ENCODE measurements at regions of chr2 and their contacts with region 1.

Region 1: GRCh38 chr2:146135245-146135644 is 1615.3 kb upstream of the ZEB2 start:
- DNase-seq: no peak
- H3K4me3 ChIP-seq: no peak overlapping the region
- H3K27ac ChIP-seq: no peak overlapping the region
- H3K4me1 ChIP-seq: no peaks in the 10 kb centered on the region
- H3K27me3 ChIP-seq: no peaks in the 10 kb centered on the region
- CTCF ChIP-seq: no peak
- POLR2A ChIP-seq: no peak

Region 2: GRCh38 chr2:145524836-145525235 is 610.4 kb before region 1 on chr2:
- intact Hi-C with region 1: loop called (anchors 10 kb)
- DNase-seq: no peak
- H3K4me3 ChIP-seq: no peak overlapping the region
- H3K27ac ChIP-seq: no peak overlapping the region
- H3K4me1 ChIP-seq: no peaks in the 10 kb centered on the region
- H3K27me3 ChIP-seq: no peaks in the 10 kb centered on the region
- CTCF ChIP-seq: no peak
- POLR2A ChIP-seq: no peak

Region 3: GRCh38 chr2:146041274-146041910 is 93.9 kb before region 1 on chr2:
- intact Hi-C with region 1: no loop called
- DNase-seq: no peak
- H3K4me3 ChIP-seq: no peak overlapping the region
- H3K27ac ChIP-seq: no peak overlapping the region
- H3K4me1 ChIP-seq: no peaks in the 10 kb centered on the region
- H3K27me3 ChIP-seq: no peaks in the 10 kb centered on the region
- CTCF ChIP-seq: no peak
- POLR2A ChIP-seq: no peak

Region 4: GRCh38 chr2:146532509-146533147 is 397.4 kb after region 1 on chr2:
- intact Hi-C with region 1: loop called (anchors 5 kb)
- DNase-seq: no peak
- H3K4me3 ChIP-seq: no peak overlapping the region
- H3K27ac ChIP-seq: no peak overlapping the region
- H3K4me1 ChIP-seq: no peaks in the 10 kb centered on the region
- H3K27me3 ChIP-seq: no peaks in the 10 kb centered on the region
- CTCF ChIP-seq: no peak
- POLR2A ChIP-seq: no peak

Measured in breast epithelium (tissue), 4 donors.